ENCODE measurements at regions of chr5 and their contacts with region 1.

Region 1: DNA sequence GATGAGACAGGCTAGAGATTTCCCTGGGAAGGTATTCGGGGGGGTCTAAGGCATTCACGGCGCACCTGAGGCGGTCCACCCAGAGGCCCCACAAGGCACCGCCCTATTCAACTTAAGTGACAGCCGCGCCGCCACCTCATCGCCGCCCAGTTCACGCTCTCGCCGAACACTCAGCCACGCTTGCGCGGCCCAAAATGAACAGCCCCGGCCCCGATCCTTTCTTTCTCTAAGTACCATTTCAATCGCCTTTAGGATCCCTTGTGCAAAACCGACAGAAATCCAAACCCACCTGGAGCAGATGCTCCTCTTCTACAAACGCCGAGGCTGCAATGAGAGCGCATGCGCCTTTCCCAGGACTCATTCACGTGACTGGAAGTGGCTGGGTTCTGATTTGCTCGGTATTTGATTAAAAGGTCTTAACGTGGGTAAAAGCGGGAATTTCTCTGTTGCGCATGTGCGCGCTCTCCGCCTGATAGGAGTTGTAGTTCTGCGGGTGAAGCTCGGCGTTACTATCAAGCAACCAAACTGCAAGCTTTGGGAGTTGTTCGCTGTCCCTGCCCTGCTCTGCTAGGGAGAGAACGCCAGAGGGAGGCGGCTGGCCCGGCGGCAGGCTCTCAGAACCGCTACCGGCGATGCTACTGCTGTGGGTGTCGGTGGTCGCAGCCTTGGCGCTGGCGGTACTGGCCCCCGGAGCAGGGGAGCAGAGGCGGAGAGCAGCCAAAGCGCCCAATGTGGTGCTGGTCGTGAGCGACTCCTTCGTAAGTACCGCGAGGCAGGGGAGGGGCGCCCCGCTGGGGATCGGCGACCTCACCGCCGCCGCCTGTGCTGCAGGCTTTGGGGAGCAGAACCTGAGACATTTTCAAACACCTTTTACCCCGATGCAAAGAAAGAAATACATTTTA is at the starts of genes ARSK and SKIC3:
- DNase-seq: peak; percentile 91
- H3K4me3 Mint-ChIP-seq: peak within 1 kb of the TSS; percentile 93
- H3K27ac Mint-ChIP-seq: peak within 1 kb of the TSS; percentile 86
- H3K4me1 Mint-ChIP-seq: peaks cover 11% of the 10 kb centered on the region
- H3K27me3 Mint-ChIP-seq: no peaks in the 10 kb centered on the region
- CTCF ChIP-seq: peak; percentile 21
- total RNA-seq, gene ARSK: 6.6 and 7.1 TPM in 2 replicates
- total RNA-seq, gene SKIC3: 93.0 and 102 TPM in 2 replicates

Region 2: DNA sequence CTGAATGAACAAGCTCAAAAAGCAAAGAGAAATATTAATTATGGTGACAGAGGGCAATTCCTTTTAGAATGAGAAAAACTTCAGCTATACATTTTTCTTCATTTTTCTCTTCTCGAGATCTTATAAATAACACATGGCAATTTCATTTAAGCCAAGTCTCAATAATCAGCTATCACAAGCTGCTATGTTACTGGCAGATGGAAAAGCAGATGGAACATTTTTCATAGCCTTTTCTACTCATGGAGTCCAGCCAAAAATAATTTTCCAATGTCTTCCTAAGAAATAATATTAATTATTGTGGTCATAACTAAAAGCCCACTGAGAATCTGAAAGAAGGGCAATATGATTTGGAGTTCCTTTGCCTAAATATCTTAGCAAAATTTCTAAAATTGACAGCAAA is 35.7 kb before region 1 on chr5:
- CTCF ChIA-PET with region 1: no interaction called
- intact Hi-C with region 1: loop called (anchors 1 kb)
- DNase-seq: no peak
- H3K4me3 Mint-ChIP-seq: no peak overlapping the region
- H3K27ac Mint-ChIP-seq: no peak overlapping the region
- H3K4me1 Mint-ChIP-seq: no peaks in the 10 kb centered on the region
- H3K27me3 Mint-ChIP-seq: no peaks in the 10 kb centered on the region
- CTCF ChIP-seq: no peak

Region 3: DNA sequence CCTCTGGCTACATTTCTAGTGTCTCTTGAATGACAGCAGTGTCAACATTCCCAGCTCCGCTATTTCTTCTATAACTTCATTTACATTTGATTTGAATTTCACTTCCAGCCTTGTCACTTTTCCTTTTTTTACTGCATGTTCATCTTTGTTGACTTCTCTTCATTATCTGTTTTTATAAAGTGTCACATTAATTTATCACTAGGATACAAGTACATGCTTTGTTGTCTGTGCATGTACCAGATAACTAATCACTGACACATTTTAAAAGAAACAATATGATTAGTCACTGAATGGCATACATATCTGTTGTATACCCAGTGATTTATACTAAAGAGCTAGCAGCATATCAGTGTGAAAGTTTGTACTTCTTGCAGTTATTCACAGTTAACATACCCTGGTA is 29.1 kb after region 1 on chr5:
- CTCF ChIA-PET with region 1: no interaction called
- intact Hi-C with region 1: no loop called
- DNase-seq: no peak
- H3K4me3 Mint-ChIP-seq: no peak overlapping the region
- H3K27ac Mint-ChIP-seq: no peak overlapping the region
- H3K4me1 Mint-ChIP-seq: no peaks in the 10 kb centered on the region
- H3K27me3 Mint-ChIP-seq: no peaks in the 10 kb centered on the region
- CTCF ChIP-seq: no peak

Region 4: GRCh38 chr5:95619514-95620029 is 64.7 kb after region 1 on chr5:
- CTCF ChIA-PET with region 1: no interaction called
- intact Hi-C with region 1: loop called (anchors 2 kb)
- DNase-seq: no peak
- H3K4me3 Mint-ChIP-seq: peak overlapping the region; percentile 73
- H3K27ac Mint-ChIP-seq: no peak overlapping the region
- H3K4me1 Mint-ChIP-seq: peaks cover 9% of the 10 kb centered on the region
- H3K27me3 Mint-ChIP-seq: peaks cover 32% of the 10 kb centered on the region
- CTCF ChIP-seq: no peak

Region 5: GRCh38 chr5:96743065-96743768 is 1188.3 kb after region 1 on chr5:
- CTCF ChIA-PET with region 1: no interaction called
- intact Hi-C with region 1: no loop called
- DNase-seq: no peak
- H3K4me3 Mint-ChIP-seq: no peak overlapping the region
- H3K27ac Mint-ChIP-seq: peak overlapping the region; percentile 71
- H3K4me1 Mint-ChIP-seq: peaks cover 7% of the 10 kb centered on the region
- H3K27me3 Mint-ChIP-seq: no peaks in the 10 kb centered on the region
- CTCF ChIP-seq: no peak